Activated naive CD4-positive, alpha-beta T cell treated with anti-CD3 and anti-CD28 coated beads for 36 hours (primary cell): ENCODE measurements at regions of chr17 and their contacts with region 1.

Region 1: DNA sequence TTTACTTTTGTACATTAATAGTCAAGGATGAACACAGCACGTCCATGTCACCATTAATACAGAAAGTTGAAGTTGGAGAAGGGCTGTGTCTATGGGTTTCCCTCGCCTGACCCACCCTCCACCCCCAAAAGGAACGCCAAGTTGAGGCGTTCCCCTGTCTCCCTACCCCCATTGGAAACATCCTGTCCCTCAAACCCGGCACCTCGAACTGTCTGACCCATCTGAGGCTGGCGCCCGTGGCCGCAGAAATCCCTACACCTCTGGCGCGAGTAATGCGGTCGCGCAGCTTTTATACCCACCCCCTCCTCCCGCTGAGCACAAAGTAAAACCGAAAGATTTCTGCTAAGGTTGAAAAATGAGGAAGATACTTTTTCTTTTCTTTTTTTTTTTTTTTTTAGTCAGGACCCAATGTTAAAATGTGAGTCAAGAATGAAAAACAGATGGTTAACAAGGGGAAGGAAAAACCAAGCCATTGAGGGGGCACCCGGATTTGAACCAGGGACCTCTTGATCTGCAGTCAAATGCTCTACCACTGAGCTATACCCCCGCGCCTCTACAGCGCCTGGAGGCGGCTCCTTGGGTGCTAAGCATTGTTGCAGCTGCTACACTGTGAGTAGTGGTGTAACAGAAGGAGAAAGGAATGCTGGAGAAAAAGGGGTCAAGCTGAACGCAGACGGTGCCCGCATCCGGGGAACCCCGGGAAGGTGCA is 887 bp upstream of the LASP1 start:
- DNase-seq: peak; percentile 95
- H3K4me3 Mint-ChIP-seq: peak overlapping the region; percentile 98
- H3K27ac Mint-ChIP-seq: peak overlapping the region; percentile 98
- H3K4me1 Mint-ChIP-seq: peaks cover 44% of the 10 kb centered on the region
- H3K27me3 Mint-ChIP-seq: peaks cover 2% of the 10 kb centered on the region

Region 2: GRCh38 chr17:38702166-38702899 is 166.6 kb before region 1 on chr17:
- CTCF ChIA-PET with region 1: no interaction called
- intact Hi-C with region 1: loop called (anchors 1 kb)
- DNase-seq: peak; percentile 92
- H3K4me3 Mint-ChIP-seq: peak overlapping the region; percentile 100
- H3K27ac Mint-ChIP-seq: peak overlapping the region; percentile 100
- H3K4me1 Mint-ChIP-seq: peaks cover 45% of the 10 kb centered on the region
- H3K27me3 Mint-ChIP-seq: no peaks in the 10 kb centered on the region

Region 3: GRCh38 chr17:38824899-38825761 is 43.8 kb before region 1 on chr17 and contains the start of gene CWC25:
- CTCF ChIA-PET with region 1: no interaction called
- intact Hi-C with region 1: loop called (anchors 1 kb)
- DNase-seq: peak; percentile 95
- H3K4me3 Mint-ChIP-seq: peak within 1 kb of the TSS; percentile 91
- H3K27ac Mint-ChIP-seq: peak within 1 kb of the TSS; percentile 99
- H3K4me1 Mint-ChIP-seq: peaks cover 29% of the 10 kb centered on the region
- H3K27me3 Mint-ChIP-seq: no peaks in the 10 kb centered on the region
- total RNA-seq, gene CWC25: 18.6 to 21.9 TPM

Region 4: DNA sequence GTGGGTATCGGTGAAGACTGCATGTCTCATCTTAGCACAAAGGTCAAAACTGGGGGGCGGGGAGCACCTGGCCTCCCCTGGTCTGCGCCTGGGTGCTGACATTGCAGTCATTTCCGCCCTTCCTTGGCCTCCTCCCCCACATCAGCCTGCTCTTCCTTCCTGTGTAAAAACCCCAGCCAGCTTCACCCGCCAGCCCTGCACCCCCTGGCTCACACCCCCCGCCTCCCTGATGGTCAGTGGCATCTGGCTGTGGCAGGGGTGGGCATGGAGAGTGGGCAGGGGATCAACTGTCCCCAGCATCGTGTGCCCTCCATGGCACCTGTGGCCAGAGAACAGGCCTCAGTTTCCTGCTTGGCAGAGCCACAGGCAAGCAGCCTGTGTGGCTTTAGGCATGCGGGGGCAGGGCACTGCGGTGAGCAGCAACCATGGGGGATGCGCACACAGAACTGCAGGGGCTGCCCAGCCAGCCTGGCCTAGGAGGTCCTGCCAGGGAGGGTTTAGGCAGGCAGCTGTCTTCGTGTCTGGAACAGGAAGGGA is 29.9 kb after region 1 on chr17:
- CTCF ChIA-PET with region 1: interaction called, 26 read pairs
- intact Hi-C with region 1: loop called (anchors 1 kb)
- DNase-seq: peak; percentile 96
- H3K4me3 Mint-ChIP-seq: peak overlapping the region; percentile 67
- H3K27ac Mint-ChIP-seq: peak overlapping the region; percentile 95
- H3K4me1 Mint-ChIP-seq: peaks cover 54% of the 10 kb centered on the region
- H3K27me3 Mint-ChIP-seq: no peaks in the 10 kb centered on the region

Region 5: GRCh38 chr17:38967290-38967738 is 98.3 kb after region 1 on chr17 and contains the start of gene FBXO47:
- CTCF ChIA-PET with region 1: interaction called, 3 read pairs
- intact Hi-C with region 1: loop called (anchors 1 kb)
- DNase-seq: peak; percentile 93
- H3K4me3 Mint-ChIP-seq: peak within 1 kb of the TSS; percentile 75
- H3K27ac Mint-ChIP-seq: peak within 1 kb of the TSS; percentile 87
- H3K4me1 Mint-ChIP-seq: peaks cover 12% of the 10 kb centered on the region
- H3K27me3 Mint-ChIP-seq: no peaks in the 10 kb centered on the region
- total RNA-seq, gene FBXO47: 0.14 to 0.15 TPM

Region 6: DNA sequence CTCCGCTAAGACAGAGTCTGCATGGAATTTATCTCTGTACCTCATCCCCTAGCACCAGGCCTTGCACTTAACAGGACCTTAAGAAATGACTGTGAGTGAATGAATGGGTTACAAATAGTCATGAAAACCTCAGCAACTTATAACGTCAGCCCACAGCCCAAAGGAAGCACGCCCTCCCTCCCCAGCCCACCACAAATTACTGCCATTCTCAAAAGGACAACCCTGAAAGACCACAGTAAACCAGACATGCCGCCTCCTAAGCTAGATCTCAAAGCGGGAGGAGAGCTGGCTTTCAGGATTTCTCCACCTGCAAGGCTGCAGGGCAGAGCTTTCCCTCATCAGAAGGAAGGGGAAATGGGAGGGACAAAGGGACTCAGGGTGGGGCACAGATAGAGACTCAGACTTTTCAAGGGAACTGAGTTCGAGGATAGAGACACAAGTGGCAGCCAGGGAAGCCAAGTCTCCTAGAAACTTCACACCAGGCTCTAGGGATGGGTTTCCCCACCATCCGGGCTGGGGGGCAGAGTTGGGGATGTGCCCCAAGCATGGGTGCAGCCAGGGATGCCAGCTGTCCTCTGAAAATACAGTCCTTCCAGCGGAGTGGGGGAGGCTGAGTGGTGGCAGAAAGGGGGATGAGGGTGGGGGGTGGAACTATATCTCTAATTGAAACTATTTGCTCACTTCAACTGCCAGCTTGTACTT is 225.8 kb after region 1 on chr17:
- CTCF ChIA-PET with region 1: interaction called, 4 read pairs
- intact Hi-C with region 1: loop called (anchors 5 kb)
- DNase-seq: no peak
- H3K4me3 Mint-ChIP-seq: no peak overlapping the region
- H3K27ac Mint-ChIP-seq: peak overlapping the region; percentile 47
- H3K4me1 Mint-ChIP-seq: peaks cover 74% of the 10 kb centered on the region
- H3K27me3 Mint-ChIP-seq: no peaks in the 10 kb centered on the region

Region 7: DNA sequence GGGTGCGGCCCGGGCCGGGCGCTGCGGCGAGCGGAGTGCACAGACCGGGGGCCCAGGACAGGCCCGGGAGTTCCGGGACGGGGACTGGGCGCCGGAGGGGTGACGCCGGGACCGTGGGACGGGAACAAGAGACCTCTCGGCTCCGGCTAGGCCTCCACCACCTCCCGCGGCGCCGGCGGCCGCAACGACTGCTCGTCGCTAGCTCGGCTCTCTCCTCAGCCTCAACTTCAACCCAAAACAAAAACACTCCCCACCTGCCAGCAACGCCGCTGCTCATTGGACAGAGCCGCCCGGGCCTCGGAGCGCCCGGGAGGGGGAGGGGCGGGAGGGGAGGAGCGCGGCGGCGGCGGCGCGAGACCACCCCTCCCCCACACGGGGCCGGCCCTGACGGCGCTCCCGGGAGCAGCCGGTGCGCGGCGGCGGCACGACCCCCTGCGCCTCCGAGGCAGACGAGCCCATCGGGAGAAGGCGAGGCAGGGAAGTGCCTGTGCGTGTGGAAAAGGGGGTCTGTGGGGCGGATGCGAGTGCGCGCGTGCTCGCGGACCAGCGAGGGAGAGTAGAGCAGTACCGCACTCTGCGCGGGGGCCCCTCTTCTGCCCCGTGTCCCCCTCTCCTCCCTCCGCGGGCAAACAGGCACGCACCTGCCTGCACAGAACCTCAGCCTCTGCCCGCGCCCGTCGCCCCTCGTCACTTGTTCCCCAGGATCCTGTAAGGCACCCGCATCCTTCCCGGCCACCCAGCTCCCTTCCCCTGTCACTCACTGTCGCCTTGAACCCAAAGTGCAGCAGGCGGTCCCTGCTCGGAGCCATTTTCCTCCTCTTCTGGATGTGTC is 532.7 kb after region 1 on chr17 and contains the start of gene FBXL20:
- CTCF ChIA-PET with region 1: no interaction called
- intact Hi-C with region 1: loop called (anchors 10 kb)
- DNase-seq: peak; percentile 96
- H3K4me3 Mint-ChIP-seq: peak within 1 kb of the TSS; percentile 91
- H3K27ac Mint-ChIP-seq: peak within 1 kb of the TSS; percentile 90
- H3K4me1 Mint-ChIP-seq: peaks cover 61% of the 10 kb centered on the region
- H3K27me3 Mint-ChIP-seq: no peaks in the 10 kb centered on the region
- total RNA-seq, gene FBXL20: 14.2 to 15.4 TPM